Naive thymus-derived CD4-positive, alpha-beta T cell (primary cell): ENCODE measurements at regions of chr13 and their contacts with region 1.

Region 1: GRCh38 chr13:32310134-32310706 is 4.9 kb downstream of the ZAR1L start:
- DNase-seq: peak in 7 of 9 donors; percentile 16 to 64 (median 51)
- ATAC-seq: peak; percentile 58
- H3K4me3 ChIP-seq: no peak overlapping the region
- H3K4me3 Mint-ChIP-seq: peak overlapping the region in 7 of 10 donors; percentile 10 to 61 (median 28)
- H3K27ac ChIP-seq: no peak overlapping the region
- H3K27ac Mint-ChIP-seq: peak overlapping the region in 1 of 9 donors; percentile 18
- H3K4me1 ChIP-seq: peaks cover 5 to 7% of the 10 kb centered on the region in 2 donors
- H3K4me1 Mint-ChIP-seq: peaks cover 13 to 28% (median 14%) of the 10 kb centered on the region in 7 donors
- H3K27me3 ChIP-seq: no peaks in the 10 kb centered on the region
- H3K27me3 Mint-ChIP-seq: peaks cover 0 to 2% (median 0%) of the 10 kb centered on the region in 5 donors

Region 2: DNA sequence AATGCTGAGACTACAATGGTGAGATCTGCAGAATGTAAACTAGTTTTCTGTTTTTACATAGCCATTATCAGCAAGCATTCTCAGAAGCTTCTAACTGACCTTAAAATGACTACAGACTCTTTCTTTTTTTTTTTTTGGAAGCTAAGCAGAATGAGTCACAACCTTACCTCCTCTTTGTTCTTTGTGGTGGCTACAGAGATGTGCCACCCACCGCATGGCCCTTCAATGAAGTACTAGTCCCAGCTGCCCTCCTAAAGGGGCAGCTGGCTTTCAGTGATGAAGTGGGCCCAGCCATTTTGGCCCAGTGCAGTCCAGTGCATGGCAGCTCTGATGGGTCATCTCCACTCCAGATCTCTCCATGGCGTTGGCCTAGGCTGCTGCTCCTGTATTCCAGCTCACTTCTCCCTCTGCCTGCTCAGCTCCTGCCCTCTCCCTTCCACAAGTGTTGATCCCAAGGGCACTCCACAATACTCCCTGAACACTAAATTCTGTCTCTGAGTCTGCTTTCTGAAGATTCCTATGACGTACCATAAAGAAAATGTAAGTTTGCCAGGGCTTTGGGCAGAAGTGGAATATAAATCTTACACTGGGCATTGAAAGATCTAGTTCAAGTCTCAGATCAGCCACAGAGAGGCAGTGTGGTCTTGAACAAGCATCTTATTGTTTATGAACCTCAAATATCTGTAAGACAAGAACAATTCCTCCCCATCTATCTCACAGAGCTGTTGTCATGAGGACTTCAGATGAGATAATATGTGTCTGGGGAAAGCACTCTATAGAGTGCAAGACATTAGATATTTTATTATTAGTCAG is 485.3 kb before region 1 on chr13:
- CTCF ChIA-PET with region 1: no interaction called
- POLR2A ChIA-PET with region 1: no interaction called
- intact Hi-C with region 1: loop called in 1 of 2 experiments (anchors 1 kb)
- DNase-seq: no peak
- ATAC-seq: peak; percentile 46
- H3K4me3 ChIP-seq: no peak overlapping the region
- H3K4me3 Mint-ChIP-seq: no peak overlapping the region
- H3K27ac ChIP-seq: no peak overlapping the region
- H3K27ac Mint-ChIP-seq: no peak overlapping the region
- H3K4me1 ChIP-seq: no peaks in the 10 kb centered on the region
- H3K4me1 Mint-ChIP-seq: peaks cover 0 to 9% (median 0%) of the 10 kb centered on the region in 7 donors
- H3K27me3 ChIP-seq: no peaks in the 10 kb centered on the region
- H3K27me3 Mint-ChIP-seq: peaks cover 0 to 22% (median 5%) of the 10 kb centered on the region in 5 donors

Region 3: DNA sequence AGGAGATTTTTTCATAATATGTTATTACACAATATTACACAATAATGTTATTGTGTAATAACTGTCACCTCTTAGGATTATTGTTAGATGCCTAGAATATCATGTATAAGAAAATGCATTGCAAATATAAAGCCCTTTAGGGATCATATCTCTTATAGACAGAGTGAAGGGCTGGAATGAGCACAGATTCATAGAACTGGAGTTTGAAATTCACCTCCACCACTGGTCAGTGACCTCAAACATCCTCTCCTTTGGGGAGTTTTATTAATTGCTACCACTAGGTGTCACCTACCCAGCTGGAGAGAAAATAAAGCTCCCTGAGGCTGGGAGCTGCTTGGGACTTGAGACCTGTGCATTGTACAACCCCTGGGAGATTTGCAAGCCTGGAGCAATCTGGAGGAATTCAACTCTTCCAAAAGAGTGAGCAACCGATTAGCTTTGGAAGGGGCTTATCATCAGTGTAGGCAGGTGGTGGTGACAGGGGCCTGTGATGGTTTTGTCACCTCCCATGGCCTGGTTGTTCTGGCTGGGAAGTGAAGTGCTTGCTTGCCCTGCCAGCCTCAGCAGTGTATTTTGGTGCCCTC is 308.9 kb before region 1 on chr13:
- CTCF ChIA-PET with region 1: no interaction called
- POLR2A ChIA-PET with region 1: no interaction called
- intact Hi-C with region 1: loop called in 1 of 2 experiments (anchors 2 kb)
- DNase-seq: peak in 4 of 9 donors; percentile 6 to 18 (median 11)
- ATAC-seq: peak; percentile 77
- H3K4me3 ChIP-seq: no peak overlapping the region
- H3K4me3 Mint-ChIP-seq: no peak overlapping the region
- H3K27ac ChIP-seq: no peak overlapping the region
- H3K27ac Mint-ChIP-seq: no peak overlapping the region
- H3K4me1 ChIP-seq: no peaks in the 10 kb centered on the region
- H3K4me1 Mint-ChIP-seq: no peaks in the 10 kb centered on the region
- H3K27me3 ChIP-seq: no peaks in the 10 kb centered on the region
- H3K27me3 Mint-ChIP-seq: peaks cover 0 to 11% (median 5%) of the 10 kb centered on the region in 5 donors

Region 4: GRCh38 chr13:32246468-32246867 is 63.8 kb before region 1 on chr13:
- CTCF ChIA-PET with region 1: no interaction called
- POLR2A ChIA-PET with region 1: no interaction called
- intact Hi-C with region 1: loop called (anchors 1 to 5 kb)
- DNase-seq: peak in 2 of 9 donors; percentile 14 to 56
- ATAC-seq: peak; percentile 75
- H3K4me3 ChIP-seq: no peak overlapping the region
- H3K4me3 Mint-ChIP-seq: no peak overlapping the region
- H3K27ac ChIP-seq: no peak overlapping the region
- H3K27ac Mint-ChIP-seq: peak overlapping the region in 1 of 9 donors; percentile 62
- H3K4me1 ChIP-seq: no peaks in the 10 kb centered on the region
- H3K4me1 Mint-ChIP-seq: peaks cover 0 to 6% (median 0%) of the 10 kb centered on the region in 7 donors
- H3K27me3 ChIP-seq: no peaks in the 10 kb centered on the region
- H3K27me3 Mint-ChIP-seq: no peaks in the 10 kb centered on the region

Region 5: DNA sequence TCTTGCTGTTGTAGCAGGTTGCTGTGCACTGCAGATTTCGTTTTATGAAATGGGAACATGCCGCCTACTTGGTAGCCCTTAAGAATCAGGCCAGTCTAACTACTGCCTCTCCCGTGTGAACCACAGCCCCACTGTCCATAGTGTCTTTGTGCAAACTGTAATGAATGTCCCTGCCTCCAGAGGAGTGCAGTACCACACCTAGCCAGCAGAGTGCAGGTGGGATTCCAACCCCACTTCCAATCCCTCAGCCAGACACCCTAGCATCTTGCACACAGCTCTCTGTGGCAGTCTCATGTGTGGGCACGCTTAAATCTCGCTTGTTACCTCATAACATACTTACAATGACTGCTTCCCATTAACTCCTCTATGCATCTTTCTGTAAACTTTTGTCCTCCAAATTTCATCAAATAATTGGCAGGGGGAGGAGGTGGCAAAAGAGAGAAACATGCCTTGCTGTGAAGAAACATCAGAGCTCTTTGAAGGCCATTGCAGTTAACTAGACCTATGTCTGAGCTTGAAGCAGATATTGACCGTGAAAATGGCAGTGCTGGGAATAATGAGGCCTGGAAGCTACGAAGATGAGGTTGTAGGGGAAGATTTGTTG is 42.3 kb before region 1 on chr13:
- CTCF ChIA-PET with region 1: no interaction called
- POLR2A ChIA-PET with region 1: no interaction called
- intact Hi-C with region 1: loop called (anchors 1 kb)
- DNase-seq: peak; percentile 13 to 56 (median 35)
- ATAC-seq: peak; percentile 76
- H3K4me3 ChIP-seq: no peak overlapping the region
- H3K4me3 Mint-ChIP-seq: no peak overlapping the region
- H3K27ac ChIP-seq: no peak overlapping the region
- H3K27ac Mint-ChIP-seq: peak overlapping the region in 1 of 9 donors; percentile 46
- H3K4me1 ChIP-seq: no peaks in the 10 kb centered on the region
- H3K4me1 Mint-ChIP-seq: no peaks in the 10 kb centered on the region
- H3K27me3 ChIP-seq: no peaks in the 10 kb centered on the region
- H3K27me3 Mint-ChIP-seq: no peaks in the 10 kb centered on the region

Region 6: GRCh38 chr13:32381539-32381938 is 71.3 kb after region 1 on chr13:
- CTCF ChIA-PET with region 1: no interaction called
- POLR2A ChIA-PET with region 1: no interaction called
- intact Hi-C with region 1: no loop called
- DNase-seq: peak in 6 of 9 donors; percentile 5 to 41 (median 24)
- ATAC-seq: peak; percentile 73
- H3K4me3 ChIP-seq: no peak overlapping the region
- H3K4me3 Mint-ChIP-seq: no peak overlapping the region
- H3K27ac ChIP-seq: no peak overlapping the region
- H3K27ac Mint-ChIP-seq: no peak overlapping the region
- H3K4me1 ChIP-seq: no peaks in the 10 kb centered on the region
- H3K4me1 Mint-ChIP-seq: peaks cover 0 to under 1% (median 0%) of the 10 kb centered on the region in 7 donors
- H3K27me3 ChIP-seq: no peaks in the 10 kb centered on the region
- H3K27me3 Mint-ChIP-seq: no peaks in the 10 kb centered on the region